Posterior cingulate gyrus (tissue), 11 donors: ENCODE measurements at regions of chr16 and their contacts with region 1.

Region 1: GRCh38 chr16:27109666-27110523 is 43.2 kb downstream of the C16orf82 start:
- DNase-seq: peak; percentile 27 to 95 (median 66)

Region 2: GRCh38 chr16:25270577-25270976 is 1839.3 kb before region 1 on chr16:
- intact Hi-C with region 1: loop called (anchors 10 kb)
- DNase-seq: no peak

Region 3: DNA sequence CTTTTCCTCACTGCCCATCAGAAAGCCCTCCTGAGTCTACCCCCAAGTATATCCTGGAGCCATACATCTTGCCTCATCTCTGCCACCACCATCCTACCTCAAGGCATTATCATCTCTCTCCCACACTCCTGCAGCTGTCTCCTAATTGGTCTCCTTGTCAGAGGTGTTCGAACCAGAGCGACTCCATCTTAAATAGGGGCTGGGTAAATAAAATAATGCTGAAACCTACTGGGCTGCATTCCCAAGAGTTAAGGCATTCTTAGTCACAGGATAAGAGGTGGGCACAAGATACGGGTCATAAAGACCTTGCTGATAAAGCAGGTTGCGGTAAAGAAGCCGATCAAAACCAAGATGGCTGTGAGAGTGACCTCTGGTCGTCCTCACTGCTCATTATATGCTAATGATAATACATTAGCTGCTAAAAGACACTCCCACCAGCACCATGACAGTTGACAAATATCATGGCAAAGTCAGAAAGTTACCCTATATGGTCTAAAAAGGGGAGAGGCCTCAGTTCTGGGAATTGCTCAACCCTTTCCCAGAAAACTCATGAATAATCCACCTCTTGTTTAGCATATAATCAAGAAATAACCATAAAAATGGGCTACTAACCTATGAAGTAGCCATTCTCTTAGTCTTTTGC is 140.2 kb before region 1 on chr16:
- intact Hi-C with region 1: no loop called
- DNase-seq: no peak